ENCODE measurements at regions of chr10 and their contacts with region 1.

Region 1: DNA sequence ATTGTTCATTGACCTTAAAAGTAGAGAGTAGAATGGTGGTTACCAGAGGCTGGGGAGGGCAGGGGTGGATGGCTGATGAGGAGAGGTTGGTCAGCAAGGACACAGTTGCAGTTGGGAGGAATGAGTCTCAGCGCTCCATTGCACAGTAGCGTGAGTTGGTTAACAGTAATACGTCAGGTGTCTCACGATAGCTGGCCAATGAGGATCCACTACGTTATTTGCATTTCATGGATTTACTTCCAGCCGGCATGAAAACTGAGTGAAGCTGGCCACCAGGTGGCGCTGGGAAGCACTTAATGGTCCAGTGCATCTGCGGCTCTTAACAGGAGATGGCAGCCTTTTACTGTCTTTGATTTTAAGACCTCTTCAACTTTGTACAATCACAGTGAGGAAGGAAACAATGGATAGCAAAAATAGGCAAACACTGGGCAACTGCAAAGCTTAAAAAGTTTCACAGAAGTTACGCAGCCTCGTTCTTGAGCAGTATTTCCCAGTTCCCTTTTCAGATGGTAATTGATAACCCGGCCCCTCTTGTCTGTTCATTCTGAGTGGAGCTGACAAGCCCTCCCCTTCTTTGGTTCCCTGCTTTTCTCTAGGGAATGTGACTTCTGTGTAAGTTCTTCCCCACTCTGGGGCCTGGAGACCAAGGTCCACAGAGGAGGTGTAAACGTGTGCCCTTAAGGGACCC is 23.7 kb downstream of the AKR1E2 start:
- DNase-seq: peak; percentile 88 to 91
- H3K4me3 ChIP-seq: no peak overlapping the region
- H3K27ac ChIP-seq: no peak overlapping the region
- H3K4me1 ChIP-seq: peaks cover 0 to 3% (median 2%) of the 10 kb centered on the region in 4 experiments; a peak in 4 of 7 replicates
- H3K27me3 ChIP-seq: 0 out of 7 replicates have a peak, but pooled peaks cover 0 to 3% (median 0%) of the 10 kb centered on the region in 4 experiments
- CTCF ChIP-seq: peak; percentile 94 to 100 (median 100)
- EP300 ChIP-seq: no peak
- POLR2A ChIP-seq: no peak
- RAD21 ChIP-seq: peak; percentile 99

Region 2: GRCh38 chr10:4607681-4608080 is 242.0 kb before region 1 on chr10:
- CTCF ChIA-PET with region 1: no interaction called
- POLR2A ChIA-PET with region 1: no interaction called
- DNase-seq: no peak
- H3K4me3 ChIP-seq: no peak overlapping the region
- H3K27ac ChIP-seq: no peak overlapping the region
- H3K4me1 ChIP-seq: no peaks in the 10 kb centered on the region
- H3K27me3 ChIP-seq: no peaks in the 10 kb centered on the region
- CTCF ChIP-seq: no peak
- EP300 ChIP-seq: no peak
- POLR2A ChIP-seq: no peak
- RAD21 ChIP-seq: no peak

Region 3: GRCh38 chr10:4813023-4813422 is 36.7 kb before region 1 on chr10:
- CTCF ChIA-PET with region 1: interaction called, 17 read pairs
- POLR2A ChIA-PET with region 1: no interaction called
- DNase-seq: no peak
- H3K4me3 ChIP-seq: no peak overlapping the region
- H3K27ac ChIP-seq: no peak overlapping the region
- H3K4me1 ChIP-seq: no peaks in the 10 kb centered on the region
- H3K27me3 ChIP-seq: no peaks in the 10 kb centered on the region
- CTCF ChIP-seq: no peak
- EP300 ChIP-seq: no peak
- POLR2A ChIP-seq: no peak
- RAD21 ChIP-seq: no peak

Region 4: GRCh38 chr10:4839401-4839800 is 10.3 kb before region 1 on chr10:
- CTCF ChIA-PET with region 1: interaction called, 66 read pairs
- POLR2A ChIA-PET with region 1: no interaction called
- DNase-seq: no peak
- H3K4me3 ChIP-seq: no peak overlapping the region
- H3K27ac ChIP-seq: no peak overlapping the region
- H3K4me1 ChIP-seq: no peaks in the 10 kb centered on the region
- H3K27me3 ChIP-seq: no peaks in the 10 kb centered on the region
- CTCF ChIP-seq: no peak
- EP300 ChIP-seq: no peak
- POLR2A ChIP-seq: no peak
- RAD21 ChIP-seq: no peak

Region 5: DNA sequence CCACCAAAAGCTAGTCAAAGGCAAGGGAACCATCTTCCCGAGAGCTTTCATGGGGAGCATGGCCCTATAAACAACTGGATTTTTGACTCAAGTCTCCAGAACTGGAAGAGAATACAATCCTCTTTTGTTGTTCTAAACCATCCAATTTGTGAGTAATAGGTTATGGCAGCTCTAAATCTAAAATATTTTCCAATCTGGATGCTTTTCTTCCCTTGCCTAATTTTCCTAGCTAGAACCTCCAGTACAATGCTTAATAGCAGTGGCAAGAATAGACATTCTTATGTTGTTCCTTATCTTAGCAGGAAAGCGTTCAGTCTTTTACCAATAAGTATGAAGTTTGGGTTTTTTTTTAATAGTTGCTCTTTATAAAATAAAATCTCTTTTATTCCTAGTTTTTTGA is 43.0 kb after region 1 on chr10:
- CTCF ChIA-PET with region 1: interaction called, 11 read pairs
- POLR2A ChIA-PET with region 1: no interaction called
- DNase-seq: no peak
- H3K4me3 ChIP-seq: no peak overlapping the region
- H3K27ac ChIP-seq: no peak overlapping the region
- H3K4me1 ChIP-seq: no peaks in the 10 kb centered on the region
- H3K27me3 ChIP-seq: no peaks in the 10 kb centered on the region
- CTCF ChIP-seq: no peak
- EP300 ChIP-seq: no peak
- POLR2A ChIP-seq: no peak
- RAD21 ChIP-seq: no peak

Region 6: DNA sequence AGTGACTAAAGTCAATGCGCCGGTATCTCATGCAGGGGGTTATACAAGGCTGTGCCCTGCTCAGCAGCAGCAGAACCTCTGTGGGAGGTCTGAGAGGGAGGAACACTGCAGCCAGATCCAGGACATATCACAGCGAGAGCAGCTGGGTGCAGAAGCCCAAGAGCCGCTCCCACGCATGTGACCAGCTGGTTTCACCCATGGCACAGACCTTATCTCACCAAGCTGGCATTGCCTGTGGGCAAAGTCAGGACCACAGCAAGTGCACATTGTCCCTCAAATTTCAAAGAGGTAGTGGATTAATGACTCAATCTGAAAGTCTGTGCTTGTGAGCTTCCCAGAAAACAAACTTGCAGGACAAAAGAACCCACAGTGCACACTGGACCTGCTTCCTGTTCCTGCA is 81.9 kb after region 1 on chr10:
- CTCF ChIA-PET with region 1: no interaction called
- POLR2A ChIA-PET with region 1: no interaction called
- DNase-seq: no peak
- H3K4me3 ChIP-seq: no peak overlapping the region
- H3K27ac ChIP-seq: no peak overlapping the region
- H3K4me1 ChIP-seq: peaks cover 0 to 3% (median 0%) of the 10 kb centered on the region in 4 experiments; a peak in 1 of 7 replicates
- H3K27me3 ChIP-seq: no peaks in the 10 kb centered on the region
- CTCF ChIP-seq: no peak
- EP300 ChIP-seq: no peak
- POLR2A ChIP-seq: no peak
- RAD21 ChIP-seq: no peak

Region 7: DNA sequence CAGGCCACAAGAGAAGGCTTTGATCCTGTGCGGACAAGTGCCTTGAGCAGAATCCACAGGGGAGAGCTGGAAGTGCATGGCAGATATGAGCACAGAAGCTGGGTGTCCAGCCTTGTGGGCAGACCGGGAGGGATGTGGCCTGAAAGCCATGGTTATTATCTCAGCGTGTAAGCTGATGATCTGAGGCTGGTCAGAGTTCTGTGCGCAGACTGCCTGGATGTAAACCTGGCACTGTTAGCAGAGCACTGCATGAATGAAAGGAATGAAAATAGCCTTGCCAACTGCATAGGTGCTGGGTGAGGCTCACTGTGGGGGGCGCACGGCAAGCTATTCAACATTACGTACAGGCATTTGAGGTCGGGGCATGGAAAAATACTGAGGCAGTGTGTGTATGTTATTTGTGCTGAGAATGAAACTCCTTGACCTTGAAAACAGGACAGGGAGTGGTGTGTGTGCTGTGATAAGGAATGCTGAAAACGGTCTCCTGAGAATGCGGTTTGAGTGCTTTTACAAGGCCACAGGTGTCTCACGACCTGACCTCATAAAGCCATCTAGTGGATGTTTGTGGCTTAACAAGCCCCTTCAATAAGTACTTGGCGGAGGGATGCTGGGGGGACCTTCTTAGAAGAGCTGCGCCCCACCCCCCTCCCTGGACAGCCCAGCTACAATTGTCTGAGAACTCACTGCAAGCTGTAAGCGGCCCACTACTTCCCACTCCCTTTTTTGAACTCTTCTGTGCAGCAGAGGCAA is 132.2 kb after region 1 on chr10:
- CTCF ChIA-PET with region 1: interaction called, 86 read pairs
- POLR2A ChIA-PET with region 1: no interaction called
- DNase-seq: peak; percentile 19 to 47
- H3K4me3 ChIP-seq: no peak overlapping the region
- H3K27ac ChIP-seq: no peak overlapping the region
- H3K4me1 ChIP-seq: peaks cover 4 to 7% (median 4%) of the 10 kb centered on the region in 4 experiments; a peak in 6 of 7 replicates
- H3K27me3 ChIP-seq: no peaks in the 10 kb centered on the region
- CTCF ChIP-seq: peak; percentile 20 to 82 (median 69)
- EP300 ChIP-seq: no peak
- POLR2A ChIP-seq: no peak
- RAD21 ChIP-seq: peak; percentile 63 to 74

Region 8: DNA sequence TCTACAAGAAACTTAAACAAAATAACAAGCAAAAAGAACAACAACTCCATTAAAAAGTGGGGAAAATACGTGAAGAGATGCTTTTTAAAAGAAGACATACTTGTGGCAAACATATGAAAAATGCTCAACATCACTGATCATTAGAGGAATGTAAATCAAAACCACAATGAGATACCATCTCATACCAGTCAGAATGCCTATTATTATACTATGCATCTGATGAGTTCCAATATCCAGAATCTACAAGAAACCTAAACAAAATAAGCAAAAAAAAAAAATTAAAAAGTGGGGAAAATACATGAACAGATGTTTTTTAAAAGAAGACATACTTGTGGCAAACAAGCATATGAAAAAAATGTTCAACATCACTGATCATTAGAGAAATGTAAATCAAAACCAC is 215.0 kb after region 1 on chr10:
- CTCF ChIA-PET with region 1: interaction called, 10 read pairs
- POLR2A ChIA-PET with region 1: no interaction called
- DNase-seq: no peak
- H3K4me3 ChIP-seq: no peak overlapping the region
- H3K27ac ChIP-seq: no peak overlapping the region
- H3K4me1 ChIP-seq: no peaks in the 10 kb centered on the region
- H3K27me3 ChIP-seq: no peaks in the 10 kb centered on the region
- CTCF ChIP-seq: no peak
- EP300 ChIP-seq: no peak
- POLR2A ChIP-seq: no peak
- RAD21 ChIP-seq: no peak

Region 9: GRCh38 chr10:5283305-5284158 is 433.8 kb after region 1 on chr10:
- CTCF ChIA-PET with region 1: interaction called, 32 read pairs
- POLR2A ChIA-PET with region 1: no interaction called
- DNase-seq: peak in 1 of 2 experiments; percentile 72
- H3K4me3 ChIP-seq: no peak overlapping the region
- H3K27ac ChIP-seq: no peak overlapping the region
- H3K4me1 ChIP-seq: peaks cover 0 to 11% (median 1%) of the 10 kb centered on the region in 4 experiments; a peak in 3 of 7 replicates
- H3K27me3 ChIP-seq: no peaks in the 10 kb centered on the region
- CTCF ChIP-seq: peak; percentile 74 to 81 (median 81)
- EP300 ChIP-seq: no peak
- POLR2A ChIP-seq: no peak
- RAD21 ChIP-seq: peak; percentile 75 to 81

Measured in H1 (cell line).